Activated CD4-positive, alpha-beta T cell treated with anti-CD3 and anti-CD28 coated beads for 36 hours (primary cell): ENCODE measurements at regions of chr11 and their contacts with region 1.

Region 1: DNA sequence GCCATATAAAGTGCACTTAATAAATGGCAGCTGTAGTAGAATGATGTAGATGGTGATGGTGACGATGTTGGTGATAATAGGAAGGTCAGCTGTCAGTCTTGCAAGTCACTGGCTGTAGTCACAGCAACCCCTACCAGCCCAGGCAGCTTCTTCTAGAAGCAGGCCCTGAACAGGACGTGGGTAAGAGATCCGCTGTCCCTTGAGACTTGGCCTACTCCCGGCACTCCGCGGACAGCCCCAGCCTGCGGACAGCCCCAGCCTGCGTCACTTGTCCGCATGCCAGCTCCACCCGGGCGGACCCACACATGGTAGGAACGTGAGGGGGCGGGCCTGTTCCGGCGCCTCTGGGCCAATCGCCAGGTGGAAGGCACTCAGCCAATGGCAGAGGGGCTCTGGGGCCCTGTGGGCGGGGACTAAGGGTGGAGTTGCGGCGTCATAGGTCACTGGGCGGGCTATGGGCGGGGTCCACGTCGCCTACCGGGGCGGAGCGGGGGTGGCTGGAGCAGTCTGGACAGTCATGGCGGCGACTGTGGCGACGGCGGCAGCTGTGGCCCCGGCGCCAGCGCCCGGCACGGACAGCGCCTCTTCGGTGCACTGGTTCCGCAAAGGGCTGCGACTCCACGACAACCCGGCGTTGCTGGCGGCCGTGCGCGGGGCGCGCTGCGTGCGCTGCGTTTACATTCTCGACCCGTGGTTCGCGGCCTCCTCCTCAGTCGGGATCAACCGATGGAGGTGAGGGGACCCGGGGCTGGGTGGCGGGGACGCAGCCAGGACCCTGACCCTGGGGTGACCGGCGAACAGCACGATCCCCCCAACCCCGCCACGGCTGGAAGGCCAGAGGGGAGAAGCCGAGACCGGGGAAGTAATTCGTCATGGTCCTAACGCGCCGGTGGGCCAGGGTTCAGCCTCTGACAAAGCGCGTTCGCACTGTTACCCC is at the start of gene CRY2:
- DNase-seq: peak; percentile 99
- ATAC-seq: peak; percentile 90
- H3K4me3 Mint-ChIP-seq: peak within 1 kb of the TSS; percentile 74
- H3K27ac Mint-ChIP-seq: peak within 1 kb of the TSS; percentile 58
- H3K4me1 Mint-ChIP-seq: peaks cover 53% of the 10 kb centered on the region
- H3K27me3 Mint-ChIP-seq: no peaks in the 10 kb centered on the region
- total RNA-seq, gene CRY2: 13.1 to 14.1 TPM

Region 2: DNA sequence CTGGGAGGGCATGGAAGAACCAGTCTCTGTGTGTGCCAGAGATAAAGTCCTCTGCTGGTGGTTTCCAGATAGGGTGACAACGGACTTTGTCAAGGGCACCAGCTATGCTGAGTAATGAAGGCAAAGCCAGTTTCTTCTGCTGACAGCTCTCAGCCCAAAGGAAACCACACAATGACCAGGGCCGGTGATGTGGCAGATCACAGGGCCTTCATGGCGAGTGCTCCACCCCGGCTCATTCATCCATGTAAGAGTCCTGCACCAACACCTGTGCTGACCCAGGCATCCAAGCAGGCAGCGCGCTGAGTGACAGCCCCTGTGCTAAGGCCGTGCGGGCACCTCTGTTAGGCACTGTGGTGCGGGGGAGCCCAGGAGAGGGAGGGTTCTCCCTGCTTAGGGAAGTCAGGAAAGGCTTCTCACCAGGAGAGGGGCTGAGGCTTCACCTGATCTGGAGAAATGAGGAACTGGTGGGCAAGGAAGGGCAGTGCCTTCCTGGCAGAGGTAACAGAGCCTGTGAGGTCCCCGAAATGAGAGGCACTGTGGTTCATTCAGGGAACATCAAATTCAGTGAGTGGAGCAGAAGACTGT is 930.3 kb before region 1 on chr11:
- CTCF ChIA-PET with region 1: no interaction called
- POLR2A ChIA-PET with region 1: no interaction called
- intact Hi-C with region 1: no loop called
- DNase-seq: no peak
- ATAC-seq: no peak
- H3K4me3 Mint-ChIP-seq: no peak overlapping the region
- H3K27ac Mint-ChIP-seq: no peak overlapping the region
- H3K4me1 Mint-ChIP-seq: no peaks in the 10 kb centered on the region
- H3K27me3 Mint-ChIP-seq: no peaks in the 10 kb centered on the region

Region 3: GRCh38 chr11:45354976-45355705 is 492.1 kb before region 1 on chr11:
- CTCF ChIA-PET with region 1: no interaction called
- POLR2A ChIA-PET with region 1: no interaction called
- intact Hi-C with region 1: loop called in 1 of 2 experiments (anchors 1 kb)
- DNase-seq: peak; percentile 93
- ATAC-seq: peak; percentile 97
- H3K4me3 Mint-ChIP-seq: peak overlapping the region; percentile 75
- H3K27ac Mint-ChIP-seq: peak overlapping the region; percentile 72
- H3K4me1 Mint-ChIP-seq: peaks cover 21% of the 10 kb centered on the region
- H3K27me3 Mint-ChIP-seq: peaks cover 2% of the 10 kb centered on the region

Region 4: DNA sequence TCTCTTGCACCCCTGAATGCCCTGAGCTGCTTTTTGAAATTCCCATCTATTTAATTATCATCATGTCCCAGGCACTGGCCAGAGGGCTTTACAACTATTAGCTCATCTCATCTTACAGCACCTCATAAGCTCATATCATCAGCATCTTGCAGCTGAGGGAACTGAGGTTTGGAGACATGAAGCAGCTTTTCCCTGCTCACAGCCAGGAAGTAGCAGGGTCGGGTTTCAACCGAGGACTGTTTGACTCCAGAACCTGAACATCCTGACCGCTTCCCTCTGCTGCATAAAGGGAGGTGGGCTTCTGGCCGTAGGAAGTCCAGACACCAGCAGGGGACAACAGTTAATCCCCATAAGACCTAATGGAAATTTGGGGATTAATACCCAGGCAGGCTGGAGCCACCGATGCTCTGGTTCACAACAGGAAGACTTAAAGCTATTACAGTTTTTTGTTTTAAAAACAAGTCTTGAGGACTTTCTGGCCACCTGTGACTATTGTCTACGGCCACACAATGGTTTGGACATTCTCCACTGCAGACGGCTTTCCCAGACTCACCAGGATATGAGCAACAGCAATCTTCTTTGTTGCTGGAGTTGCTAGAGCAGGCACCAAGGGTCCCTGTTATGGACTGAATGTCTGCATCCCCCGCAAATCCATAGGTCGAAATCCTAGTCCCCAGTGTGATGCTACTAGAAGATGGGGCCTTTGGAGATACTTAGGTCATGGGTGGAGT is 229.2 kb before region 1 on chr11:
- CTCF ChIA-PET with region 1: no interaction called
- POLR2A ChIA-PET with region 1: no interaction called
- intact Hi-C with region 1: no loop called
- DNase-seq: no peak
- ATAC-seq: no peak
- H3K4me3 Mint-ChIP-seq: no peak overlapping the region
- H3K27ac Mint-ChIP-seq: no peak overlapping the region
- H3K4me1 Mint-ChIP-seq: no peaks in the 10 kb centered on the region
- H3K27me3 Mint-ChIP-seq: peaks cover 33% of the 10 kb centered on the region

Region 5: GRCh38 chr11:45828996-45829513 is 18.2 kb before region 1 on chr11:
- CTCF ChIA-PET with region 1: interaction called, 15 read pairs
- POLR2A ChIA-PET with region 1: no interaction called
- intact Hi-C with region 1: no loop called
- DNase-seq: no peak
- ATAC-seq: no peak
- H3K4me3 Mint-ChIP-seq: no peak overlapping the region
- H3K27ac Mint-ChIP-seq: no peak overlapping the region
- H3K4me1 Mint-ChIP-seq: peaks cover 4% of the 10 kb centered on the region
- H3K27me3 Mint-ChIP-seq: peaks cover 12% of the 10 kb centered on the region

Region 6: GRCh38 chr11:45917623-45918330 is 70.5 kb after region 1 on chr11 and contains the start of gene PEX16:
- CTCF ChIA-PET with region 1: interaction called, 4 read pairs
- POLR2A ChIA-PET with region 1: interaction called, 8 read pairs
- intact Hi-C with region 1: loop called (anchors 1 kb)
- DNase-seq: peak; percentile 97
- ATAC-seq: peak; percentile 94
- H3K4me3 Mint-ChIP-seq: peak within 1 kb of the TSS; percentile 96
- H3K27ac Mint-ChIP-seq: peak within 1 kb of the TSS; percentile 95
- H3K4me1 Mint-ChIP-seq: peaks cover 31% of the 10 kb centered on the region
- H3K27me3 Mint-ChIP-seq: peaks cover 3% of the 10 kb centered on the region
- total RNA-seq, gene PEX16: 28.1 to 33.4 TPM

Region 7: GRCh38 chr11:45959851-45960250 is 112.6 kb after region 1 on chr11:
- CTCF ChIA-PET with region 1: no interaction called
- POLR2A ChIA-PET with region 1: no interaction called
- intact Hi-C with region 1: no loop called
- DNase-seq: no peak
- ATAC-seq: no peak
- H3K4me3 Mint-ChIP-seq: no peak overlapping the region
- H3K27ac Mint-ChIP-seq: no peak overlapping the region
- H3K4me1 Mint-ChIP-seq: no peaks in the 10 kb centered on the region
- H3K27me3 Mint-ChIP-seq: no peaks in the 10 kb centered on the region

Region 8: GRCh38 chr11:46238967-46239800 is 391.9 kb after region 1 on chr11:
- CTCF ChIA-PET with region 1: interaction called, 3 read pairs
- POLR2A ChIA-PET with region 1: no interaction called
- intact Hi-C with region 1: loop called (anchors 2 kb)
- DNase-seq: peak; percentile 90
- ATAC-seq: peak; percentile 70
- H3K4me3 Mint-ChIP-seq: peak overlapping the region; percentile 70
- H3K27ac Mint-ChIP-seq: peak overlapping the region; percentile 6
- H3K4me1 Mint-ChIP-seq: peaks cover 36% of the 10 kb centered on the region
- H3K27me3 Mint-ChIP-seq: peaks cover 11% of the 10 kb centered on the region